Activated CD4-positive, alpha-beta T cell treated with anti-CD3 and anti-CD28 coated beads, Interleukin-2, amount 10 ng/mL, durations not matched to agents 7 days and 5 days (primary cell): ENCODE measurements at regions of chr5 and their contacts with region 1.

Region 1: GRCh38 chr5:139512786-139513390 is 30.3 kb upstream of the STING1 start:
- DNase-seq: no peak
- H3K4me3 Mint-ChIP-seq: no peak overlapping the region
- H3K27ac Mint-ChIP-seq: peak overlapping the region; percentile 70
- H3K4me1 Mint-ChIP-seq: peaks cover 48% of the 10 kb centered on the region
- H3K27me3 Mint-ChIP-seq: no peaks in the 10 kb centered on the region

Region 2: GRCh38 chr5:139104577-139105276 is 408.2 kb before region 1 on chr5:
- CTCF ChIA-PET with region 1: no interaction called
- POLR2A ChIA-PET with region 1: no interaction called
- DNase-seq: no peak
- H3K4me3 Mint-ChIP-seq: no peak overlapping the region
- H3K27ac Mint-ChIP-seq: no peak overlapping the region
- H3K4me1 Mint-ChIP-seq: no peaks in the 10 kb centered on the region
- H3K27me3 Mint-ChIP-seq: peaks cover 6% of the 10 kb centered on the region

Region 3: GRCh38 chr5:139524932-139525585 is 12.2 kb after region 1 on chr5:
- CTCF ChIA-PET with region 1: interaction called, 17 read pairs
- POLR2A ChIA-PET with region 1: no interaction called
- DNase-seq: no peak
- H3K4me3 Mint-ChIP-seq: no peak overlapping the region
- H3K27ac Mint-ChIP-seq: no peak overlapping the region
- H3K4me1 Mint-ChIP-seq: no peaks in the 10 kb centered on the region
- H3K27me3 Mint-ChIP-seq: no peaks in the 10 kb centered on the region

Region 4: DNA sequence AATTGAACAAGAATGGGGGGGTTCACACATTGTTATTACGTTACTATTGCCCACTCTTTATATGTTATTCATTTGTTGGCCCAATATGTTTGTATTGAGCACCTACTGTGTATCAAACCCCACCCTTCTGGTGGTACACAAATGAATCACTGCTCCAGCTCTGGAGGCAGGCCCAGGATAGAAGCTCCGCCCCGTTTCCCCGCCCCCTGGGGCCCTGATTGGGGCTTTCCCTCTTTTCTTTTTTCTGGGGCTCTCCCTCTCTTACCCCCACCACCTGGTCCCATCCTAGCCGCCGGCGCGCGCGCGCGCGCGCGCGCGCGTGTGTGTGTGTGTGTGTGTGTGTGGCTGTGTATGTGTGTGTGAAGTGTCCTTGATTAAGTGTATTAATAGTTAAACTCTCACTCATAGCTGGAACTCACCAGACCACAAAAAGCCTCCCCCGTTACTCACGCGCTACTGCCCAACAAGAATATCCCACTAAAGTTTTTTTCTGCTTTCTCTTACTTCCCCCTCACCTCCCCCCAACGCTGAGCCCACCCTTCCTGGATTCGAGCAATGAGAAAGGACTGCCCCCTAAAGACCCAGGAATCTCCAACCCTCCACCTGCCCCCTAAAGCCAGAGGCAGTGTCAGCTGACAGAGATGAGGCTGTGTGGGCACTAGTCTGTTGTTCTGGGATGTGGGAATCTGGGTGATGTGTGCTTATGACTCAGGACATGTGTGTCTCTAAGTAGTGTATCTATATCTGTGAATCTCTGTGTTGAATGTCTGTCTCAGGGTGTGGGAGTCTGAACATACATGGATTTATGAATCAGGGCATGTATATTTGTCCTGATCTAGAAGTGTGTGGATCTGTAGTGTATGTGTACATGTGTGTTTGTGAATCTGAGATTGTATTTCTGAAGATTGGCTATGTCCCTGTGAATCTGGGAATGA is 139.2 kb after region 1 on chr5:
- CTCF ChIA-PET with region 1: no interaction called
- POLR2A ChIA-PET with region 1: no interaction called
- DNase-seq: peak; percentile 53
- H3K4me3 Mint-ChIP-seq: no peak overlapping the region
- H3K27ac Mint-ChIP-seq: no peak overlapping the region
- H3K4me1 Mint-ChIP-seq: peaks cover 28% of the 10 kb centered on the region
- H3K27me3 Mint-ChIP-seq: peaks cover 61% of the 10 kb centered on the region